ENCODE measurements at regions of chr1 and their contacts with region 1.

Region 1: GRCh38 chr1:156146020-156146768 is 7.2 kb upstream of the SEMA4A start:
- DNase-seq: peak; percentile 72
- ATAC-seq: peak; percentile 80
- H3K4me3 Mint-ChIP-seq: peak overlapping the region; percentile 63
- H3K27ac Mint-ChIP-seq: peak overlapping the region; percentile 85
- H3K4me1 Mint-ChIP-seq: peaks cover 47% of the 10 kb centered on the region
- H3K27me3 Mint-ChIP-seq: no peaks in the 10 kb centered on the region

Region 2: DNA sequence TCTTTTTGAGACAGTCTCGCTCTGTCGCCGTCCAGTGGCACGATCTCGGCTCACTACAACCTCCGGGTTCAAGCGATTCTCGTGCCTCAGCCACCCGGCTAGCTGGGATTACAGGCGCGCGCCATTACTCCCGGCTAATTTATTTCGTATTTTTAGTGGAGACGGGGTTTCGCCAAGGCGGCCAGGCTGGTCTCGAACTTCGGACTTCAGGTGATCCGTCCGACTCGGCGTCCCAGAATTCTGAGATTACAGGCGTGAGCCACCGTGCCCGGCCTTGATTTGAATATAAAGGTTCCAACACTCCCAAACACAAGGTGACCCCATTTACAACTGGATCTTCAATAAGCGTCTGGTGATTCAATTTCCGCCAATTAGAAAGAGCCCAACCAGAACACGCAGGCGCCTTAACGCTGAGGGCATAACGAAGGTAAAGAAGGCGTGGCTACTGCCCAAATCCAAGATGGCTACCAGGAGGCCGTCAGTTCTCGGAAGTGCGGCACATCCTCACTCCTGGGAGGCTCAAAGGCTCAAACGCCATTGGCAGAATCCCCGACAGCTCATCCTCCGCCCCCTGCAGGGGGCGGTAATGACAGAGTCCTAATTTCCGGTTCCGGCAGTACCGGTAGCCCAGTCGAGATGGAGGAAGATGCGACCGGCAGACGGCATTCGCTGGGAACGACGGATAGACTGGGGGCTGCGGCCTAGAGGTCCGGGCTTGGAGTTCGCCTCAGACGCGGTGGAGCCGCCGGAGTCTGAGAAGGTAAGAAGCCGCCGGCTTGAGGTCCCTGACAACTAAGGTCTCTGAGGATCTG is 47.5 kb after region 1 on chr1 and contains the start of gene SLC25A44:
- CTCF ChIA-PET with region 1: interaction called, 29 read pairs
- POLR2A ChIA-PET with region 1: interaction called, 24 read pairs
- DNase-seq: peak; percentile 98
- ATAC-seq: peak; percentile 98
- H3K4me3 Mint-ChIP-seq: peak within 1 kb of the TSS; percentile 89
- H3K27ac Mint-ChIP-seq: peak within 1 kb of the TSS; percentile 87
- H3K4me1 Mint-ChIP-seq: peaks cover 57% of the 10 kb centered on the region
- H3K27me3 Mint-ChIP-seq: no peaks in the 10 kb centered on the region
- total RNA-seq, gene SLC25A44: 31.8 to 33.8 TPM

Region 3: DNA sequence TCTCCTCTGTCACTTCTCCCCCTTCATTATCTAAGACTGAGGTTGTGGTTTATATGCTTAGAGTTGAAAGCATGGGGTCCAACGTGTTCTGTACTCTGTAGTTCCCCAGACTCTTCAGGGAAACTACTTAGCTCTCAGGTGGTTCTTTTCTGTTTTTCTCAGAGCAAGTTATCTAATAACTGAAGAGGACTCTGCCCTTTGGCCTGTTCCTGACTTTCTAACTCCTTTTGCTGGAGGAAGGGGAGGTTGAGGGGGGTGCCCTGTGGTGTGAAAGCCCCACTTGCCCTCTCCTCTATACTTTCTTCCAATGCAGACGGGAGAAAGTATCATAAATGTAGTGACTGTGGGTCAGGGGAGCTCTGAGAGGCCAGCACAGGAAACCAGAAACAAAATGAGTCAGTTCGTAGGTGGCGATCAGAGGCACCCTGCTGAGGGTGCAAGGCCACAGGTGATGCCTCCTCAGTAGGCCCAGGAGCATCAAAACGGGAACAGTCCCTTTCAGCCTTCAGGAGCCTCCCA is 52.7 kb after region 1 on chr1:
- CTCF ChIA-PET with region 1: interaction called, 29 read pairs
- POLR2A ChIA-PET with region 1: interaction called, 24 read pairs
- DNase-seq: no peak
- ATAC-seq: peak; percentile 44
- H3K4me3 Mint-ChIP-seq: peak overlapping the region; percentile 62
- H3K27ac Mint-ChIP-seq: peak overlapping the region; percentile 90
- H3K4me1 Mint-ChIP-seq: peaks cover 64% of the 10 kb centered on the region
- H3K27me3 Mint-ChIP-seq: no peaks in the 10 kb centered on the region

Measured in activated CD8-positive, alpha-beta T cell treated with anti-CD3 and anti-CD28 coated beads, Interleukin-2, amount 10 ng/mL, durations not matched to agents 7 days and 5 days (primary cell).